GM12878 (cell line): ENCODE measurements at regions of chr22 and their contacts with region 1.

Region 1: GRCh38 chr22:40583053-40583741 is 53.3 kb downstream of the MRTFA start:
- DNase-seq: no peak
- ATAC-seq: peak; percentile 84
- H3K4me3 ChIP-seq: peak overlapping the region; percentile 12; the same call in 1 of the 2 replicates
- H3K27ac ChIP-seq: peak overlapping the region; percentile 28
- H3K4me1 ChIP-seq: peaks cover 36% of the 10 kb centered on the region
- H3K27me3 ChIP-seq: no peaks in the 10 kb centered on the region
- CTCF ChIP-seq: no peak
- EP300 ChIP-seq: no peak; a peak in 1 of 4 replicates
- POLR2A ChIP-seq: no peak
- RAD21 ChIP-seq: no peak

Region 2: GRCh38 chr22:40426594-40427333 is 156.4 kb before region 1 on chr22:
- CTCF ChIA-PET with region 1: no interaction called
- POLR2A ChIA-PET with region 1: no interaction called
- RAD21 ChIA-PET with region 1: no interaction called
- SMC1A ChIA-PET with region 1: no interaction called
- in situ Hi-C with region 1: no loop called
- intact Hi-C with region 1: no loop called
- DNase-seq: no peak
- ATAC-seq: no peak
- H3K4me3 ChIP-seq: no peak overlapping the region
- H3K27ac ChIP-seq: no peak overlapping the region; the same call in 1 of the 2 replicates
- H3K4me1 ChIP-seq: no peaks in the 10 kb centered on the region
- H3K27me3 ChIP-seq: no peaks in the 10 kb centered on the region
- CTCF ChIP-seq: no peak
- EP300 ChIP-seq: no peak
- POLR2A ChIP-seq: 0 out of 2 replicates have a peak, but pooled peaks have one; percentile 36
- RAD21 ChIP-seq: no peak

Region 3: GRCh38 chr22:40567626-40568328 is 15.4 kb before region 1 on chr22:
- CTCF ChIA-PET with region 1: interaction called, 4 read pairs
- POLR2A ChIA-PET with region 1: no interaction called
- RAD21 ChIA-PET with region 1: interaction called, 4 read pairs
- SMC1A ChIA-PET with region 1: interaction called, 20 read pairs
- in situ Hi-C with region 1: no loop called
- intact Hi-C with region 1: no loop called
- DNase-seq: no peak
- ATAC-seq: peak; percentile 34; the same call in 1 of the 3 replicates
- H3K4me3 ChIP-seq: no peak overlapping the region
- H3K27ac ChIP-seq: no peak overlapping the region
- H3K4me1 ChIP-seq: no peaks in the 10 kb centered on the region
- H3K27me3 ChIP-seq: no peaks in the 10 kb centered on the region
- CTCF ChIP-seq: no peak
- EP300 ChIP-seq: no peak
- POLR2A ChIP-seq: no peak
- RAD21 ChIP-seq: no peak

Region 4: GRCh38 chr22:40597526-40598430 is 14.6 kb after region 1 on chr22:
- CTCF ChIA-PET with region 1: interaction called, 11 read pairs
- POLR2A ChIA-PET with region 1: interaction called, 23 read pairs
- RAD21 ChIA-PET with region 1: interaction called, 25 read pairs
- SMC1A ChIA-PET with region 1: interaction called, 75 read pairs
- in situ Hi-C with region 1: no loop called
- intact Hi-C with region 1: no loop called
- DNase-seq: no peak
- ATAC-seq: no peak
- H3K4me3 ChIP-seq: no peak overlapping the region
- H3K27ac ChIP-seq: no peak overlapping the region; the same call in 1 of the 2 replicates
- H3K4me1 ChIP-seq: peaks cover 54% of the 10 kb centered on the region
- H3K27me3 ChIP-seq: no peaks in the 10 kb centered on the region
- CTCF ChIP-seq: 0 out of 6 replicates have a peak, but pooled peaks of 1 of the 3 experiments have one; percentile 0
- EP300 ChIP-seq: no peak
- POLR2A ChIP-seq: no peak
- RAD21 ChIP-seq: no peak